Caco-2 (cell line): ENCODE measurements at regions of chr12 and their contacts with region 1.

Region 1: GRCh38 chr12:28202374-28203130 is 12.3 kb downstream of the CCDC91 start:
- DNase-seq: peak in 1 of 2 experiments; percentile 29
- H3K4me3 ChIP-seq: no peak overlapping the region
- H3K4me3 Mint-ChIP-seq: no peak overlapping the region
- H3K27ac Mint-ChIP-seq: no peak overlapping the region
- H3K4me1 ChIP-seq: peaks cover 8% of the 10 kb centered on the region; the same call in 1 of the 2 replicates
- H3K4me1 Mint-ChIP-seq: no peaks in the 10 kb centered on the region
- H3K27me3 ChIP-seq: no peaks in the 10 kb centered on the region
- H3K27me3 Mint-ChIP-seq: no peaks in the 10 kb centered on the region
- CTCF ChIP-seq: peak in 1 of 2 experiments; percentile 12

Region 2: DNA sequence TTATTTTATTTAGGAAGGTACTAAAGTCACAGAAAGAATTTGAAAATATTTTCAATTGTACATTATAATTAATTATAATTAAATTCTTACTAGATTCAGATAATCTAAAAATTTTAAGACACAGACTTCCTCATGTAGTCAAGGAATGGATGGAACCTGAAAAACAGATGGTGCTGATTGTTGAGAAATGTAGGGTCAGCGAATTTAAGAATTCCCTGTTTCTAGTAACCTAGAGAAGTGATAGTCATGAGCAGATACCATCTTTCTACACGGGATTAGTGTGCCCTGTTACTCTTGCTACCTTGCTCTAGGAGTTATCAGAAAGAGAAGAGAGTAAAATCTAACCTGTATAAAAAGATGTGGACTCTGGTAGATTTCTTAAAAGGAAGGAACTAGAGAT is 192.5 kb before region 1 on chr12:
- CTCF ChIA-PET with region 1: no interaction called
- POLR2A ChIA-PET with region 1: no interaction called
- intact Hi-C with region 1: no loop called
- DNase-seq: no peak
- H3K4me3 ChIP-seq: no peak overlapping the region
- H3K4me3 Mint-ChIP-seq: no peak overlapping the region
- H3K27ac Mint-ChIP-seq: no peak overlapping the region
- H3K4me1 ChIP-seq: no peaks in the 10 kb centered on the region
- H3K4me1 Mint-ChIP-seq: no peaks in the 10 kb centered on the region
- H3K27me3 ChIP-seq: no peaks in the 10 kb centered on the region
- H3K27me3 Mint-ChIP-seq: peaks cover 22% of the 10 kb centered on the region
- CTCF ChIP-seq: no peak

Region 3: DNA sequence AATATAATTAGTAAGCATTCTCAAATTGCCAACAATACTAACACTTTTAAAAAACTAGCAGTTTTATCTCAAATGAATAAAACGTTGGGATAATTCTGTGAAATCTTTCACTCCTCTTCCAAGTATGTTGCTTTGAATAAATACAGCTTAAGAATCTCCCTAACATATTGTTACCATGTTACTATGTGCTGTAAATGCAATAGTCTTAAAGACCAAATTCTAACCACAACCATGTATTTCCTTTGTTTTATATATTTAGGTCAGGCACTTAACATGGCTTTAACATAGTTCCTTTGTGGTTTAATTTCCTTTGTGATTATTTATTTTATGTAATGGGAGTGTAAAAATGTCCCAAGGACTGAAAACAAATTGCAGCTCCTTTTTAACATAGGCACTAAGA is 46.2 kb before region 1 on chr12:
- CTCF ChIA-PET with region 1: no interaction called
- POLR2A ChIA-PET with region 1: no interaction called
- intact Hi-C with region 1: no loop called
- DNase-seq: no peak
- H3K4me3 ChIP-seq: no peak overlapping the region
- H3K4me3 Mint-ChIP-seq: no peak overlapping the region
- H3K27ac Mint-ChIP-seq: no peak overlapping the region
- H3K4me1 ChIP-seq: no peaks in the 10 kb centered on the region
- H3K4me1 Mint-ChIP-seq: no peaks in the 10 kb centered on the region
- H3K27me3 ChIP-seq: peaks cover 2% of the 10 kb centered on the region; the same call in 1 of the 2 replicates
- H3K27me3 Mint-ChIP-seq: peaks cover 8% of the 10 kb centered on the region
- CTCF ChIP-seq: no peak

Region 4: GRCh38 chr12:28172434-28173030 is 30.0 kb before region 1 on chr12:
- CTCF ChIA-PET with region 1: no interaction called
- POLR2A ChIA-PET with region 1: no interaction called
- intact Hi-C with region 1: no loop called
- DNase-seq: peak in 1 of 2 experiments; percentile 59
- H3K4me3 ChIP-seq: no peak overlapping the region
- H3K4me3 Mint-ChIP-seq: no peak overlapping the region
- H3K27ac Mint-ChIP-seq: no peak overlapping the region
- H3K4me1 ChIP-seq: no peaks in the 10 kb centered on the region
- H3K4me1 Mint-ChIP-seq: no peaks in the 10 kb centered on the region
- H3K27me3 ChIP-seq: no peaks in the 10 kb centered on the region
- H3K27me3 Mint-ChIP-seq: peaks cover 6% of the 10 kb centered on the region
- CTCF ChIP-seq: peak; percentile 62 to 84

Region 5: DNA sequence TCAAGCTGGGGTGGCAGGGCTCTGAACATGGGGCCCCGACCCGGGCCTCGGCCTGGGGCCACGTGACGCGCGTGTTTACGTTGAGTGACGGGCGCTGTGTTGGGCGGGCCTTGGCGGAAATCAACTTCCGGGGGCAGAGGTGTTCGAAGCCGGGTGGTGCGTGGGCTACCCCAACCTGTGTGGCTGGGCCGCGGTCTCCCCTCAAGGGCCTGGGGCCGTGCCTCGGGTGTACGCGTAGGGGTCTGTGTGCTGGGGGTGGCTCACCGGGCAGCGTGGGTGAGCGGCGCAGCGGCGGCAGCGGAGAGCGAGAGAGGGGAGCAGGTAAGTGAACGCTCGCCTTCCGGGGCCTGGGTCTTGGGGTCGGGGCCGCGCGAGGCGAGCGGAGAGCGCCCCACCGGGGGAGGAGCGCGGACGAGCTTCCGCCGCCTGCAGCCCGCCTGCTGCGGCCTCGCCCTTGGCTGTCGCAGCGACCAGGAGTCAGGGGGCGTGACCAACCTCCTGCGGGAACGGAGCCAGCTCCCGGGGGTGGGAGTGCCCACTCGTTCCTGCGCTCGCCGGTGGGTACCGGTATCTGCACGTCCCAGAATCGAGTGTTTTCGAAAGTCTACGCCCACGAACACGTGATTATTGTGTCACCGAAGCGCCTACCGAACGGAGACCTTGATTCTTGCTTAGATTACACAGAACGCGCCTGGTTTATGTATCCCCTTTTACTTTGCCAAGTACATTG is 12.1 kb before region 1 on chr12 and contains the start of gene CCDC91:
- CTCF ChIA-PET with region 1: no interaction called
- POLR2A ChIA-PET with region 1: no interaction called
- intact Hi-C with region 1: loop called (anchors 1 kb)
- DNase-seq: peak; percentile 90 to 91
- H3K4me3 ChIP-seq: peak within 1 kb of the TSS; percentile 82
- H3K4me3 Mint-ChIP-seq: peak within 1 kb of the TSS; percentile 81
- H3K27ac Mint-ChIP-seq: peak within 1 kb of the TSS; percentile 98
- H3K4me1 ChIP-seq: peaks cover 11% of the 10 kb centered on the region; the same call in 1 of the 2 replicates
- H3K4me1 Mint-ChIP-seq: peaks cover 5% of the 10 kb centered on the region
- H3K27me3 ChIP-seq: no peaks in the 10 kb centered on the region
- H3K27me3 Mint-ChIP-seq: peaks cover 4% of the 10 kb centered on the region
- CTCF ChIP-seq: no peak
- total RNA-seq, gene CCDC91: 21.2 and 21.6 TPM in 2 replicates